ENCODE measurements at regions of chr7 and their contacts with region 1.

Region 1: GRCh38 chr7:110262251-110262650 is 828.7 kb upstream of the LRRN3 start:
- DNase-seq: no peak
- ATAC-seq: no peak
- H3K4me3 ChIP-seq: no peak overlapping the region
- H3K4me3 Mint-ChIP-seq: no peak overlapping the region
- H3K27ac ChIP-seq: no peak overlapping the region
- H3K27ac Mint-ChIP-seq: no peak overlapping the region
- H3K4me1 ChIP-seq: no peaks in the 10 kb centered on the region
- H3K4me1 Mint-ChIP-seq: no peaks in the 10 kb centered on the region
- H3K27me3 ChIP-seq: no peaks in the 10 kb centered on the region
- H3K27me3 Mint-ChIP-seq: peaks cover 0 to 4% (median 0%) of the 10 kb centered on the region in 5 donors

Region 2: DNA sequence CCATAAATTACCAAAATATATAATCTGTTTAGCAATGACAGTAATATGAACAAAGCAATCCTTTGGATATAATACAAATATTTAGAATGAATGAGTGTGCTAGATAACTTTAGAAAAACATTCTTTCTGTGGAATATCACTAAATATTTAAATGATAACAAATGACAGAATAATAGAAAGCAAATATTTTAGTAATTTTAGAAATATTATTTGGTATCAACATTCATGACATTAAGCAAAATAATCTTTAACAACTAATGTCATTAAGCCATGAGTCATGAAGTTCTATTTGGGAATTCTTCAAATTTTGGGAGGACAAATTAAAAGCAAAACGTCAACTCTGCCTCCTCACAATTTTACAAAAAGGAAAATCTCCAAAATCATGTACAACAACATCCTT is 16.1 kb before region 1 on chr7:
- CTCF ChIA-PET with region 1: no interaction called
- POLR2A ChIA-PET with region 1: no interaction called
- intact Hi-C with region 1: loop called in 1 of 2 experiments (anchors 2 kb)
- DNase-seq: no peak
- ATAC-seq: no peak
- H3K4me3 ChIP-seq: no peak overlapping the region
- H3K4me3 Mint-ChIP-seq: no peak overlapping the region
- H3K27ac ChIP-seq: no peak overlapping the region
- H3K27ac Mint-ChIP-seq: no peak overlapping the region
- H3K4me1 ChIP-seq: no peaks in the 10 kb centered on the region
- H3K4me1 Mint-ChIP-seq: no peaks in the 10 kb centered on the region
- H3K27me3 ChIP-seq: no peaks in the 10 kb centered on the region
- H3K27me3 Mint-ChIP-seq: peaks cover 0 to 7% (median 0%) of the 10 kb centered on the region in 5 donors

Measured in naive thymus-derived CD4-positive, alpha-beta T cell (primary cell).